AG04450 (cell line): ENCODE measurements at regions of chr2 and their contacts with region 1.

Region 1: DNA sequence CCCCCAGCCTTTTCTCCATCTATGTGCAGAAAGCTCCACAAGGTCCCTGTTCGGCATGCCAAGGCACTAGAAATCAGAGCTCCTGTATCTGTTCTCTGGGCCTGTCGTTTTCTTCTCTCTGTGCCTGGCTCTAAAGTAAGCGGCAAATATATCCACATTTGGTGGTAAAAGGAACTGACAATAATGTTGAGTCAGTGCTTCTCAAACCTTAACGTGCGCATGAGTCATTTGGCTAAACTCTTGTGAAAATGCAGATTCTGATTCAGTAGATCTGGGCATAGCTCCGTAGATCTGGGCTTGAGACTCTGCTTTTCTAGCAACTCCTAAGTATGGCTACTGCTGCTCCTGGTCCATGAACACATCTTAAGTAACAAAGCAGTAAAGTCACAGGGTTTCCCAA is 16.5 kb upstream of the ACSL3 start:
- DNase-seq: peak; percentile 58
- H3K4me3 ChIP-seq: peak overlapping the region; percentile 14; the same call in 1 of the 2 replicates
- H3K27ac ChIP-seq: peak overlapping the region; percentile 82
- H3K27me3 ChIP-seq: no peaks in the 10 kb centered on the region
- CTCF ChIP-seq: no peak

Region 2: DNA sequence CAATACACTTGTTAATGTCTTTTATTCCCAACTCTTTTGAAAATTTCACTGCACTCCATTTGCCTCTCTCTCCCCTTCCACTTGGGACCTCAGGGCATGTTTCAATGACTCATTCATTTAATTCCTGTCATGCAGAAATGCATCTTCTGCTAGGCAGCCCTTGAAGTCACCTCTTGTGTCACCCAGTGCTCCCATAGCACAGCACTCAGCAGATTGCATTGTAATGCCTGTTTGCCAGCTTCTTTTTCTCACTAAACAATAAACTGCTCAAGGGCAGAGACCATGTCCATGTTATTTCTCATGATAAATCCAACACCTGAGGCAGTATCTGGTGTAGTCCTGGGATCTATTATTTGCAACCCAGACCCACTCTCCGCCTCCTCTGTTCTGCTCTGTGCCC is 69.4 kb before region 1 on chr2:
- CTCF ChIA-PET with region 1: no interaction called
- POLR2A ChIA-PET with region 1: interaction called, 10 read pairs
- DNase-seq: no peak
- H3K4me3 ChIP-seq: no peak overlapping the region
- H3K27ac ChIP-seq: no peak overlapping the region
- H3K27me3 ChIP-seq: peaks cover 9% of the 10 kb centered on the region
- CTCF ChIP-seq: no peak

Region 3: GRCh38 chr2:222871291-222871690 is 27.0 kb after region 1 on chr2:
- CTCF ChIA-PET with region 1: interaction called, 12 read pairs
- POLR2A ChIA-PET with region 1: no interaction called
- DNase-seq: no peak
- H3K4me3 ChIP-seq: no peak overlapping the region
- H3K27ac ChIP-seq: no peak overlapping the region
- H3K27me3 ChIP-seq: no peaks in the 10 kb centered on the region
- CTCF ChIP-seq: no peak

Region 4: DNA sequence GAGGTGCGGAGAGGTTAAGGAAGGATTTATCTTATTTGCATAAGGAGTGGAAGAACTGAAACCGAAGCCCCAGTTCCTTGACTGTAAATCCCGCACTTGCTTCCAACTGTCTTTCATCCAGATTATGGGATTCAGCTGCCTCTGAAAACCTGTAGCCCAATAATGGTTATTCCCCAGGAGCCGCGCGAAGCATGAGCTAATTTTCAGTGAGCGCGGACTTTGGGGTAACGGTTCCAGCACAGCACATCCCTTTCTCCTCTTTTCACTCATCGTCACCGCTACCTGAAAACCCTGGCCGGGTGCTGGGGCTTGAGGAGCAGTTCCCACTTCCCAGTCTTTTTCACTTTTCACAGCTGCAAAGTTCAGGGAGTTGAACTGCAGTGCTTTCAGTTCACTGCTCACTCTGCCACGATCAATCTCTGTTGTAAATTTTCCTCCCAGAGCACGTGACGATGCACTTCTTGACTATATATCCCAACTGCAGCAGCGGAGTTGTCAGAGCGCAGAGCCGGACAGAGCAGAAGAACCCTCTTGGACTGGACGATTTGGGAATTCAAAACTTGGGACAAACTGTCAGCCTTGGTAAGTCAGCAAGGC is 207.5 kb after region 1 on chr2 and contains the start of gene KCNE4:
- CTCF ChIA-PET with region 1: no interaction called
- POLR2A ChIA-PET with region 1: no interaction called
- DNase-seq: no peak
- H3K4me3 ChIP-seq: peak within 1 kb of the TSS; percentile 73
- H3K27ac ChIP-seq: peak within 1 kb of the TSS; percentile 68
- H3K27me3 ChIP-seq: no peaks in the 10 kb centered on the region
- CTCF ChIP-seq: no peak
- polyA plus RNA-seq, gene KCNE4: 10.6 and 12.5 TPM in 2 replicates